Naive thymus-derived CD4-positive, alpha-beta T cell (primary cell): ENCODE measurements at regions of chr3 and their contacts with region 1.

Region 1: GRCh38 chr3:184371570-184372018 is 6.4 kb downstream of the THPO start:
- DNase-seq: peak; percentile 42 to 70 (median 59)
- ATAC-seq: peak; percentile 96
- H3K4me3 ChIP-seq: no peak overlapping the region
- H3K4me3 Mint-ChIP-seq: no peak overlapping the region
- H3K27ac ChIP-seq: no peak overlapping the region
- H3K27ac Mint-ChIP-seq: peak overlapping the region in 8 of 9 donors; percentile 4 to 65 (median 26)
- H3K4me1 ChIP-seq: no peaks in the 10 kb centered on the region
- H3K4me1 Mint-ChIP-seq: peaks cover 5 to 18% (median 10%) of the 10 kb centered on the region in 7 donors
- H3K27me3 ChIP-seq: no peaks in the 10 kb centered on the region
- H3K27me3 Mint-ChIP-seq: peaks cover 4 to 27% (median 8%) of the 10 kb centered on the region in 5 donors

Region 2: DNA sequence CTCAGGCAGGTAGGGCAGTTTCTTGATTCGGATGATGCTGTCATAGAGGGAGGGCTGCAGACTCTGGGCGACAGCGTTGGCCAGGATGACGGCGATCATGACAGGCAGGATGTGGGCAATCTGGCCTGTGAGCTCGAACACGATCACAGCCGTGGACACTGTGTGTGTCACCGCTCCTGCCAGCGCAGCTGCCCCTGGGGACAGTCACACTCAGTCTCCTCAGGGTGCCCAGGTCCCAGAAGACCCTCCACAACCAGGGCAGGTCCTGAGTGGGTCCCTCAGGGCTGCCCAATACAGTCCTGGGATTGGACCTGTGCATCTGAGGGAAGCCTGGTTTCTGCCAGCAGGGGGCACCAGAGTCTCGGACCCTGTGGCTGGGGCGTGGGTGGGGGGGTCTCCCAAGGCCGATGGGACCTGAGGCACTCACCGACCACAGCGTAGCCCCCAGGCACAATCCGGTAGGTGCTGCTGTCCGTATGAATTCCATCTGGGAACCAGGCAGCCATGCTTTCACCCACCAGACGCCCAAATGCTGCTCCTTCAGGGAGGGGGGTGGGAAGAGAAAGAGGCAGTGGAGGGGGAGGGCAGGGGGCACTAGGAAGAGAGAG is 17.4 kb before region 1 on chr3:
- CTCF ChIA-PET with region 1: interaction called, 20 read pairs
- POLR2A ChIA-PET with region 1: no interaction called
- intact Hi-C with region 1: no loop called
- DNase-seq: peak; percentile 21 to 64 (median 48)
- ATAC-seq: peak; percentile 78
- H3K4me3 ChIP-seq: no peak overlapping the region
- H3K4me3 Mint-ChIP-seq: no peak overlapping the region
- H3K27ac ChIP-seq: no peak overlapping the region
- H3K27ac Mint-ChIP-seq: peak overlapping the region in 1 of 9 donors; percentile 55
- H3K4me1 ChIP-seq: peaks cover 0 to 7% of the 10 kb centered on the region in 2 donors
- H3K4me1 Mint-ChIP-seq: peaks cover 0 to 2% (median 0%) of the 10 kb centered on the region in 7 donors
- H3K27me3 ChIP-seq: no peaks in the 10 kb centered on the region
- H3K27me3 Mint-ChIP-seq: no peaks in the 10 kb centered on the region